ENCODE measurements at regions of chr20 and their contacts with region 1.

Region 1: DNA sequence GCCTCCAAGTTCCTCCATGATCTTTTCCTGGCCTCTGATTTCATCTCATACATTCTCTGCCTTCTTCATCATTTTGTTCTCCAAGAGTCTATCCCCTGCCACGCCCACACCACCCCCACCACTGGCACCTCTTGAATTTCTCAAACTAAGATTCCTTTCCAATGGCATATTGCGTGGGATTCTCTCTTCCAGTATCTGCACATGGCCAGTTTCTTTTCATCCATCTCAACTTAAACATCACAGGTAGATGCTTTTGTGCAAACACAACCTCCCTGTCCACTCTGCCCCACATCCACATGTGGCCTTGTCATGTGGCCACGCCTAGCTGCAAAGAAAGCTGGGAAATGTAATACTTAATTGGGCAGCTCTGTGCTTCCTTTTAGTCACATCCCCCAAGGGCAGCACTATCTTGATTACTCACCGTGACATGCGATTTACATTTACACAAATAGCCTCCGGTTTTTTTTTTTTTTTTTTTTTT is 33.4 kb upstream of the ZMYND8 start:
- DNase-seq: no peak
- ATAC-seq: peak in 2 of 4 donors; percentile 50 to 64
- H3K4me3 ChIP-seq: no peak overlapping the region
- H3K27ac ChIP-seq: no peak overlapping the region
- H3K4me1 ChIP-seq: peaks cover 5% of the 10 kb centered on the region
- H3K27me3 ChIP-seq: no peaks in the 10 kb centered on the region
- CTCF ChIP-seq: no peak

Region 2: GRCh38 chr20:47196091-47197081 is 193.5 kb before region 1 on chr20:
- intact Hi-C with region 1: loop called in 1 of 2 experiments (anchors 2 kb)
- DNase-seq: peak; percentile 70 to 77
- ATAC-seq: peak; percentile 68 to 89 (median 80)
- H3K4me3 ChIP-seq: no peak overlapping the region
- H3K27ac ChIP-seq: no peak overlapping the region
- H3K4me1 ChIP-seq: no peaks in the 10 kb centered on the region
- H3K27me3 ChIP-seq: peaks cover 0 to 2% (median 0%) of the 10 kb centered on the region in 3 donors
- CTCF ChIP-seq: peak; percentile 93

Region 3: DNA sequence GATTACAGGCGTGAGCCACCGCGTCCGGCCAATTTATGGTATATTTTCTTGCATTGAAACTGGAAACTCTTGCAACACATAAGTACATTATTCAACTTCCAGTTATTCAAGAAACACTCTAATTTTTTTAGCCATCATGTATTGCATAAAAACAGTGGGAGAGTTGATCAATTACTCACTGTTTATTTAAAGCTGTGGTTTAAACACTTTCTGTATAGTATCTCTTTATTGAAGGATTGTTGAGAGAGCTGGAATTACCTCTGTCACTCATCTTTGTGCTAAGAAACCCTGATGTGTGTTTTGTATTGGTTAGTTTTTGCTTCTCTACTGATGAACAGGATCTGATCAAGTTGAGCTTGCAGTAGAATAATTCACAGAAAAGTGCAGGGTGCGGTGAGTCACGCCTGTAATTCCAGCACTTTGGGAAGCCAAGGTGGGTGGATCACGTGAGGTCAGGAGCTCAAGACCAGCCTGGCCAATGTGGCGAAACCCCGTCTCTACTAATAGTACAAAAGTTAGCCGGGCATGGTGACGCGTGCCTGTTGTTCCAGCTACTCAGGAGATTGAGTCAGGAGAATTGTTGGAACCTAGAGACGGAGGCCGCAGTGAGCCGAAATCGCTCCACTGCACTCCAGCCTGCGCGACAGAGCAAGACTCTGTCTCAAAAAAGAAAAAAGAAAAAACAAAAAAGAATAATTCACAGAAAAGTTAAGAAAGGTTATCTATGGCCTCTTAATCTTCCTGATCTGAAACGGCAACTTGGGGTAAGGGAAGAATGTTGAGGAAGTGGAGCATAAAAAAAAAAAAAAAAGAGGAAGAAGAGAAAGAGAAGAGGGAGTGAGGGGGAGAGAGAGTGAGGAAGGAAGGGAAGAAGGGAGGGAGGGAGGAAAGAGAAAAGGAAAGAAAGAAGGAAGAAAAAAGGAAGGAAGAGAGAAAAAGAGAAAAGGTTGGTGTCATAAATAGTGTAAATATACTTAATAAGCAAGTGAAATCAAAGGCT is 42.6 kb after region 1 on chr20:
- intact Hi-C with region 1: no loop called
- DNase-seq: no peak
- ATAC-seq: no peak
- H3K4me3 ChIP-seq: no peak overlapping the region
- H3K27ac ChIP-seq: no peak overlapping the region
- H3K4me1 ChIP-seq: no peaks in the 10 kb centered on the region
- H3K27me3 ChIP-seq: no peaks in the 10 kb centered on the region
- CTCF ChIP-seq: no peak

Region 4: DNA sequence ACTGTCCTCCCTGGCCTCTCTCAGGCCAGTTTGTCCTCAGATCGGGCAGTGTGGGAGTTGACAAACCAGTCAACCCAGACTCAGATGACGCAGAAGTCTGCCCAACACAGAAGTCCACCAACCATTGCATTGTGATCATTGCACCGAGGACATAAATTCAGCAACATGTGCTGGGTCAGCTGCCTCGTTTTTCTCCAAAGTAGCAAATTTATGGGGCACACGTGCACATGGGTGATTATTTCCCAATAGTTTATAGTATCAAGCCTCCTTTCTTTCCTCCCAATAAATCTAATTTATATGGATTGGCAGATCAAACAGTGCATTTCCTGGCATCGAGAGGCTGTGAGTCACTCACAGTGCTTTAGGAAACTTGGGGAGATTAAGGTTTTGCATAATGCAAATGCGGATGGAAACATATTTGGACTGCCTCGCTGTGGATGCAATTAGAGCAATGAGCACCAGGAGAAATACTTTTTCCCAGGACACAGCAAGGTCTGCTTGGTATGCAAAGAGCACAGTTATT is 809.1 kb after region 1 on chr20:
- intact Hi-C with region 1: no loop called
- DNase-seq: peak in 1 of 2 donors; percentile 8
- ATAC-seq: no peak
- H3K4me3 ChIP-seq: no peak overlapping the region
- H3K27ac ChIP-seq: no peak overlapping the region
- H3K4me1 ChIP-seq: no peaks in the 10 kb centered on the region
- H3K27me3 ChIP-seq: peaks cover 0 to 8% (median 0%) of the 10 kb centered on the region in 3 donors
- CTCF ChIP-seq: no peak

Region 5: GRCh38 chr20:48437109-48437508 is 1047.2 kb after region 1 on chr20:
- intact Hi-C with region 1: no loop called
- DNase-seq: no peak
- ATAC-seq: no peak
- H3K4me3 ChIP-seq: no peak overlapping the region
- H3K27ac ChIP-seq: no peak overlapping the region
- H3K4me1 ChIP-seq: no peaks in the 10 kb centered on the region
- H3K27me3 ChIP-seq: peaks cover 0 to 3% (median 0%) of the 10 kb centered on the region in 3 donors
- CTCF ChIP-seq: no peak

Measured in psoas muscle (tissue), 8 donors.